ENCODE measurements at regions of chr9 and their contacts with region 1.

Region 1: DNA sequence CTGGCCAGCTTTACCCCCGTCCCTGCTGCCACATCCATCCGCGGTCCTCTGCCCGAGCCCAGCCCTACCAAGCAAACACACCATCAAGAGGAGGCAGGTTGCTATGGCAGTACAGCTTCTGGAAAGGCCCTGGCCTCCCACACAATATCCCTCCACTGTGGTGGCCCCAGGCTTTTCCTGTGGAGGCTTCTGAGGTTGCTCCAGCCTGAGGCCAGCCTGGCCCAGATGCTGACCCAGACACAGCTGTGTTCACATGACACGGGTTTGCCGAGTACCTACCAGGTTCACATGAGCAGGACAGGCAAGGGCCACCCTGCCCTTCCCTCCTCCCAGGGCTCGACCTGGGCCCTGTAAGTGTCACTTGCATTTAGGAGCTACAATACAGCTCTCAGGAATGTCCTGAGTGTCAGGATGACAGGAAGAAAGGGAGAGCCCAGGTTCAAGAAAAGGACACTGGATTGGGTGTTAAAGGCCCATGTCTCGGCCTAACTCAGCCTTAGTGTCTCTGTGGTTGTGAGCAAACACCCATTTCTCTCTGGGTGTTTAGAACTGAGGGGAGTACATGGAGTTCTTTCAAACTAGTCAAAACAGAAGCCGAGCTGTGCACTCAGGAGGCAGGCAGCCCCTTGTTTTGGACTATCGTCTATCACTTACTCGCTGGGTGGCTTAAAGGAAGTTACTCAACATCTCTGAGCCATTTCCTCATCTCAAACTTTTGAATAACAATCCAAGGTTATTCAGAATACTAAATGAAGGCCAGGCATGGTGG is 40.2 kb downstream of the NAIF1 start:
- DNase-seq: peak; percentile 64
- ATAC-seq: peak; percentile 8
- H3K4me3 Mint-ChIP-seq: peak overlapping the region; percentile 79
- H3K27ac Mint-ChIP-seq: peak overlapping the region; percentile 96
- H3K4me1 Mint-ChIP-seq: peaks cover 80% of the 10 kb centered on the region
- H3K27me3 Mint-ChIP-seq: no peaks in the 10 kb centered on the region

Region 2: GRCh38 chr9:128007566-128008138 is 19.3 kb before region 1 on chr9:
- POLR2A ChIA-PET with region 1: interaction called, 35 read pairs
- DNase-seq: peak; percentile 77
- ATAC-seq: peak; percentile 86
- H3K4me3 Mint-ChIP-seq: peak overlapping the region; percentile 77
- H3K27ac Mint-ChIP-seq: peak overlapping the region; percentile 93
- H3K4me1 Mint-ChIP-seq: peaks cover 34% of the 10 kb centered on the region
- H3K27me3 Mint-ChIP-seq: no peaks in the 10 kb centered on the region

Region 3: DNA sequence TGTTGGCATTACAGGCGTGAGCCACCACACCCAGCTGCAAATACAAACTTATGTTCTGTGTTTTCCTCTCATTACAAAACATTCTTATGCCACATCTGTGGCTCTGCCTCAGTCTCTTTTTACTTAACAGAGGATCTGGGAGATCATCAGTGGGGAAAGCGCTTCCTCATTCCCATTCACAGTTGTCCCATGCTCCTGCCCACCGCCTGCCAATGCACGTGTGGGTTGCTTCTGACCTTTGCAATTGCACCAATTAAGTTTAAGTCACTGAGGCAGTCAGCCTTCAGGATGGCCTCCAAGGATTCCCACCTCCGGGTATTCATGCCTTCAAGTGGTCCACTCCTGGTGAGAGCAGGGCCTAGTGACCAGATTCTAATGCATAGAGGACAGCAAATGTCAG is 11.3 kb before region 1 on chr9:
- POLR2A ChIA-PET with region 1: interaction called, 13 read pairs
- DNase-seq: no peak
- ATAC-seq: no peak
- H3K4me3 Mint-ChIP-seq: no peak overlapping the region
- H3K27ac Mint-ChIP-seq: no peak overlapping the region
- H3K4me1 Mint-ChIP-seq: peaks cover 7% of the 10 kb centered on the region
- H3K27me3 Mint-ChIP-seq: no peaks in the 10 kb centered on the region

Region 4: DNA sequence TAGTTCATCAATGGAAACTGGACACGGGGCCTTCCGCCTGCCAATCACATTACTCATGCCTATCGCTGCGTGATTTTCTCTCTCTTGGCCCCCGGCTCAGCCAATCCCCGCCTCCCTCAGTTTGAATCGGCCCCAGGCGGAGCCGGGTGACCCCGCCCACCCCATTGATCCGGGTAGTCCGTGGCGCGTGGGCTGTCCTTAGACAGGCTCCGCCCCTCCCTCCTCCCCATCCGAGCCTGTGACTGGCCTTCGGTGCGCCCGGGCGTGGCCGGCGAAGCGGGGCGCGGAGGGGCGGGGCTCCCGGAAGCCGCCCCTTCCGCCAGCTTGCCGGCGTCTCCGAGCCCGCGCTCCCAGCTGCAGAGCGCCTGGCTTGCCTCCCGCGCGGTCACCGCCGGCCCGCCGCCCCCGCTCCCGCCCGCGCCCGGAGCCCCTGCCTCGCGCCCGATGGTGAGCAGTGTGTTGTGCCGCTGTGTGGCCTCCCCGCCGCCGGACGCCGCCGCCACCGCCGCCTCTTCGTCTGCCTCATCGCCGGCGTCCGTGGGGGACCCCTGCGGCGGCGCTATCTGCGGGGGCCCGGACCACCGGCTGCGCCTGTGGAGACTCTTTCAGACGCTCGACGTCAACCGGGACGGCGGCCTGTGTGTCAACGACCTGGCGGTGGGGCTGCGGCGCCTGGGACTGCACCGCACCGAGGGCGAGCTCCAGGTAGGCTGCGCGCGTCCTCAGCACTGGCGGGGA is 41.1 kb after region 1 on chr9 and contains the start of gene SLC25A25:
- POLR2A ChIA-PET with region 1: interaction called, 11 read pairs
- DNase-seq: peak; percentile 100
- ATAC-seq: peak; percentile 79
- H3K4me3 Mint-ChIP-seq: peak within 1 kb of the TSS; percentile 94
- H3K27ac Mint-ChIP-seq: peak within 1 kb of the TSS; percentile 84
- H3K4me1 Mint-ChIP-seq: peaks cover 39% of the 10 kb centered on the region
- H3K27me3 Mint-ChIP-seq: no peaks in the 10 kb centered on the region
- total RNA-seq, gene SLC25A25: 21.2 to 21.8 TPM

Measured in activated naive CD8-positive, alpha-beta T cell treated with anti-CD3 and anti-CD28 coated beads, Interleukin-2, amount 10 ng/mL, durations not matched to agents 7 days and 5 days (primary cell).